ENCODE measurements at regions of chr16 and their contacts with region 1.

Region 1: GRCh38 chr16:1812732-1813163 is 13.9 kb downstream of the HAGH start:
- DNase-seq: peak; percentile 27 to 76 (median 49)
- ATAC-seq: peak; percentile 98
- H3K4me3 ChIP-seq: no peak overlapping the region
- H3K4me3 Mint-ChIP-seq: no peak overlapping the region
- H3K27ac ChIP-seq: no peak overlapping the region
- H3K27ac Mint-ChIP-seq: no peak overlapping the region
- H3K4me1 ChIP-seq: peaks cover 3% of the 10 kb centered on the region
- H3K4me1 Mint-ChIP-seq: peaks cover 6% of the 10 kb centered on the region
- H3K27me3 ChIP-seq: no peaks in the 10 kb centered on the region
- H3K27me3 Mint-ChIP-seq: no peaks in the 10 kb centered on the region
- CTCF ChIP-seq: peak; percentile 58

Region 2: GRCh38 chr16:1929578-1930337 is 117.0 kb after region 1 on chr16:
- CTCF ChIA-PET with region 1: interaction called, 6 read pairs
- POLR2A ChIA-PET with region 1: no interaction called
- intact Hi-C with region 1: loop called (anchors 1 to 2 kb)
- DNase-seq: peak; percentile 79 to 96 (median 92)
- ATAC-seq: peak; percentile 100
- H3K4me3 ChIP-seq: peak overlapping the region; percentile 42
- H3K4me3 Mint-ChIP-seq: peak overlapping the region; percentile 88
- H3K27ac ChIP-seq: no peak overlapping the region
- H3K27ac Mint-ChIP-seq: no peak overlapping the region
- H3K4me1 ChIP-seq: peaks cover 11% of the 10 kb centered on the region
- H3K4me1 Mint-ChIP-seq: no peaks in the 10 kb centered on the region
- H3K27me3 ChIP-seq: peaks cover 0 to under 1% of the 10 kb centered on the region in 2 experiments
- H3K27me3 Mint-ChIP-seq: peaks cover 2% of the 10 kb centered on the region
- CTCF ChIP-seq: peak; percentile 94